PC-3 (cell line): ENCODE measurements at regions of chr10 and their contacts with region 1.

Region 1: DNA sequence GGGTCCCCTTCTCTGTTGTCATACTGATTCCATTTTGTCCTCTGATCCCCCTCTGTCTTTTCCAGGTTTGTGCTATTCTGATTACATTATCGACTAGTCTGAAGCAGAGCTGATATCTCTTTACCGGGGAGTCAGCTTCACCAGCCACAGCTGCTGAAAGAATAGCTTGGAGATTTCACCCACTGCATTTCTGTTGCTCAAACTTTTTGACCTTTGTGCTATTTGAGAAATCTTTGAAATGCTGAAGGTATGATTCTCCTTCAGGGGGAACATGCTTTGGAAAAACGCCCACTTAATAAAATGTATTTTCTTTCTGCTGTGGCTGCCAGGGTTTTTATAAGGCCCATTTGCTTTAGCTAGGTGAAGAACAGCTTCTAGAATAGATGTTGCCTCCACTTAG is 197.8 kb upstream of the TCF7L2 start:
- DNase-seq: no peak
- ATAC-seq: no peak
- H3K4me3 ChIP-seq: no peak overlapping the region
- H3K27ac ChIP-seq: no peak overlapping the region
- H3K4me1 ChIP-seq: peaks cover 11% of the 10 kb centered on the region; the same call in 1 of the 2 replicates
- H3K27me3 ChIP-seq: no peaks in the 10 kb centered on the region
- CTCF ChIP-seq: no peak

Region 2: GRCh38 chr10:112700215-112700671 is 52.0 kb before region 1 on chr10:
- CTCF ChIA-PET with region 1: no interaction called
- POLR2A ChIA-PET with region 1: interaction called, 14 read pairs
- intact Hi-C with region 1: no loop called
- DNase-seq: no peak
- ATAC-seq: no peak
- H3K4me3 ChIP-seq: no peak overlapping the region
- H3K27ac ChIP-seq: no peak overlapping the region
- H3K4me1 ChIP-seq: no peaks in the 10 kb centered on the region
- H3K27me3 ChIP-seq: no peaks in the 10 kb centered on the region
- CTCF ChIP-seq: no peak

Region 3: DNA sequence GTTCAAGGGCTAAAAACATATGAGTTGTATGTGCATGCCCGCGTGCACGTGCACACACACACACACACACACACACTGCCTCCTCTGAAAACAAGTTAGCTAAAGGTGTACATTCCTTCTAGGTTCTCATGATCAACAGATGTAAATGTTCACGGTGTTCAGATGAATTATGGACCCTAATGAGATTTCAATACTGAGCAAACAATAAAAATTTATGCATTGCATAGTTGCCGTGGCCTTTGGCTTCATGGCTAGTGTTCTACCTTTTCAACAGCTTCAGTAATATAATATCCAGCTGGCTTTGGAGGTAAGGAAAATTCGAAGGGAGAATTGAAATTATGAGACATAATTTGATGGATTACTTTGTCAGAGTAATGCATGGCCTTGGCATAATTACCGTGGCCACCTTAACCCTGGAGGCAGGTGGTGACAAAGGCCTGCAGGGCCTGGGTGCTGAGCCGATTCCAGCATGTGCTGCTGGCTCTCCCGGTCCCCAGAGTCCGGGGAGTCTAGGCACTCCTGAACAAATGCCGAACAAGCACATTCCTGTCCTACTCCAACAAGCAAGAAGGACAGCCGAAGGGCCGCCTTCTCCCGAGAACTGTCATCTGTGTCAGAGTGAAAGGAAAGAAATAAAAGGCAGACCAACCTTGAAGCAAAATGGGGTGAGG is 31.2 kb after region 1 on chr10:
- CTCF ChIA-PET with region 1: no interaction called
- POLR2A ChIA-PET with region 1: no interaction called
- intact Hi-C with region 1: no loop called
- DNase-seq: no peak
- ATAC-seq: no peak
- H3K4me3 ChIP-seq: no peak overlapping the region
- H3K27ac ChIP-seq: no peak overlapping the region
- H3K4me1 ChIP-seq: peaks cover 14% of the 10 kb centered on the region
- H3K27me3 ChIP-seq: no peaks in the 10 kb centered on the region
- CTCF ChIP-seq: no peak